Heart left ventricle (tissue), 16 donors: ENCODE measurements at regions of chr1 and their contacts with region 1.

Region 1: GRCh38 chr1:58783993-58784757 is at the start of gene JUN:
- DNase-seq: peak; percentile 99 to 100 (median 100)
- ATAC-seq: peak; percentile 87 to 95 (median 92)
- H3K4me3 ChIP-seq: peak within 1 kb of the TSS; percentile 59 to 99 (median 92)
- H3K27ac ChIP-seq: peak within 1 kb of the TSS; percentile 95 to 100 (median 99)
- H3K4me1 ChIP-seq: peaks cover 0 to 34% (median 19%) of the 10 kb centered on the region in 12 donors
- H3K27me3 ChIP-seq: no peaks in the 10 kb centered on the region
- CTCF ChIP-seq: peak in 5 of 12 donors; percentile 8 to 45 (median 31)
- POLR2A ChIP-seq: peak; percentile 37 to 100
- total RNA-seq, gene JUN: 57.1 to 128 (median 82.8) TPM

Region 2: DNA sequence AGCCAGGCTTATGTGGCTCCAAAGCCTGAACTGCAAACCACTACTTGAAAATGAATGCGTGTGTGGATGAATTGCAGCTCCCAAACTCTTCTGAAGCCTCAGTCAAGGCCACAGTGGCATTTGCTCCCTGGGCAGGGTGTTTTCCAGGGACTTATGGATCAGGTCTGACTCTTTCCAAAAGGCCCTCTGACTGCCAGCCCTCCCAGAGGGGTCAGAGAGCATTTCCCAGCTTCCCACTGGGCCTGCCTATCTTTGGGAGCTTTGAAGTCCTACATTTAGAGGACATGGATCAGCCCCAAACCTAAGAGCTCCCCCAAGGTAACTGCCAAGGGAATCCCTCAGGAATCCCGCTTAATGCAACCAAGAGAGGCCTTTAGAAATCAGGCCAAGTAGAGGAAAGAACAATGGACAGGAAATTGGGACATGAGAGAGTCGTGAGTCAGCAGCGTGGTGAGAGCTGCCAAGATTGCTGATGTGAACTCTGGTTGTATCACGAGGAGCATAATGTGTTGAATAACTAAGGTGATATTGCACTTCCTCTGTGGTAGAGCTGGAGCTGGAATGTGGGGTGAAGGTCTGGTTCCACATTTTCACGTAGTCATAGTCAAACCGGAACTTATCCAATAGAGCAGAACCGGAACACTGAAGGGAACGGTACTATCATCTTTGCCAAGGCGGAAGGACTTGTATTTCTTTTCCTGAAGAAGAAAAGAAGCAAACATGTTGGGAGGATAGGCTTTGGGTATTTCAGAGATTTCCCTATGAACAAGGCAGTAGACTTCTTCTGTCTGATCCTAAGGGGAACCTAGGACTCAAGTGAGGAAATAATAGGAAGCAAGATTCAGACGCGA is 99.1 kb after region 1 on chr1:
- intact Hi-C with region 1: loop called in 1 of 10 experiments (anchors 5 kb)
- DNase-seq: peak; percentile 65 to 87 (median 72)
- ATAC-seq: peak; percentile 38 to 85 (median 73)
- H3K4me3 ChIP-seq: no peak overlapping the region
- H3K27ac ChIP-seq: peak overlapping the region; percentile 11 to 85 (median 70)
- H3K4me1 ChIP-seq: peaks cover 5 to 73% (median 43%) of the 10 kb centered on the region in 12 donors
- H3K27me3 ChIP-seq: no peaks in the 10 kb centered on the region
- CTCF ChIP-seq: no peak
- POLR2A ChIP-seq: no peak

Region 3: DNA sequence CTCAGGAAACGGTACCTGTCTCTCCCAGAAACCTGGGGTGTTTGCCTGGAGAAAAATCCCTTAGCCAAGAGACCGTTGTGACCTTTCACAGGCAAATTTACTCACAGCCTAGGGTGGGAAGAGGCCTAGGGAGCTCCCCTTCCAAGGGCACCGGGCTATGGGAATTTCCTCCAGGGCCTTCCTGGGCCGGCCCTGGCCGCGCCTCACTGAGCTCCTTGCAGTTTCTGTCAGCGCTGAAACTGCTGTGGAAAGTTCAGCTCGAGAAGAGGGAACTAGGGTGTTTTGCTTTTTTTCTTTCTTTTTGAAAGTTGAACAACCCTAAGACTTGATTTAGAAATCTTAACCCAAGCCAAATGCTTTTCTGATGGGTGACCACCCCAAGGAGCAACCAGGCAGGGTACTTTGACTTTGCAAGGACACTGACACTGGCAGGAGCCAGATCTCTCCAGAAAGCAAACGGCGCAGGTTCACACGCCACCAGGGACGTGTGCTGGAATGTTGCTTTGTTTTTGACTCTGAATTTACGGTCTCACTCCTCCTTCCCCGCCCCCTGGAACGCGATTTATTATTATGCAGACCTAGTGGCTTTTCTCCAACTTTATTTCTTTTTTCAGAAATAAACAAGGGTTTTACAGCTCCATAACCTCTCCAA is 229.2 kb after region 1 on chr1:
- intact Hi-C with region 1: loop called in 3 of 10 experiments (anchors 2 to 10 kb)
- DNase-seq: peak; percentile 33 to 65 (median 46)
- ATAC-seq: peak; percentile 40 to 77 (median 69)
- H3K4me3 ChIP-seq: peak overlapping the region in 5 of 12 donors; percentile 4 to 34 (median 23)
- H3K27ac ChIP-seq: peak overlapping the region; percentile 68 to 88 (median 80)
- H3K4me1 ChIP-seq: peaks cover 6 to 51% (median 24%) of the 10 kb centered on the region in 12 donors
- H3K27me3 ChIP-seq: no peaks in the 10 kb centered on the region
- CTCF ChIP-seq: no peak
- POLR2A ChIP-seq: no peak

Region 4: DNA sequence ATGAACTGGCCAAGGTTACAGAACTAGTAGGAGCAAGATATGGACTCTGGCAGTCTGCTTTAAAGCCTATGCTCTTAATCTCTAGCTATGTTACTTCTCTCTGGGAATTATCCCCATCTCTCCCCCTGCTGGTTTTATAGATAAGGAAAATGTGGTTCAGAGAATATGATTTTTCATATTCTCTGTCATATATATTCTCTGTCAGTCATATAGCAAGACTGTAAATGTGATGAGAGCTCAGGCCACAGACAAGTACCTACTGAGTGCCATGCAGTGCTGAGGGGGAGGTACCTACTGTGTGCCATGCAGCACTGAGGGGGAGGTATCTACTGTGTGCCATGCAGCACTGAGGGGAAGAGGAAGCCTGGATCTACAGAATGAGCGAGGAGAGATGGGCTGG is 292.4 kb after region 1 on chr1:
- intact Hi-C with region 1: loop called in 2 of 10 experiments (anchors 10 kb)
- DNase-seq: no peak
- ATAC-seq: peak in 1 of 4 donors; percentile 14
- H3K4me3 ChIP-seq: no peak overlapping the region
- H3K27ac ChIP-seq: no peak overlapping the region
- H3K4me1 ChIP-seq: peaks cover 0 to 28% (median 6%) of the 10 kb centered on the region in 12 donors
- H3K27me3 ChIP-seq: no peaks in the 10 kb centered on the region
- CTCF ChIP-seq: peak in 8 of 12 donors; percentile 11 to 44 (median 22)
- POLR2A ChIP-seq: no peak

Region 5: GRCh38 chr1:59296358-59297256 is 512.4 kb after region 1 on chr1 and contains the start of gene FGGY:
- intact Hi-C with region 1: loop called (anchors 1 to 10 kb)
- DNase-seq: peak; percentile 98 to 99 (median 98)
- ATAC-seq: peak; percentile 94 to 97 (median 95)
- H3K4me3 ChIP-seq: peak within 1 kb of the TSS; percentile 8 to 81 (median 62)
- H3K27ac ChIP-seq: peak within 1 kb of the TSS; percentile 90 to 99 (median 96)
- H3K4me1 ChIP-seq: peaks cover 0 to 45% (median 18%) of the 10 kb centered on the region in 12 donors
- H3K27me3 ChIP-seq: no peaks in the 10 kb centered on the region
- CTCF ChIP-seq: no peak
- POLR2A ChIP-seq: peak; percentile 51 to 78
- total RNA-seq, gene FGGY: 20.8 to 42.9 (median 33.9) TPM

Region 6: GRCh38 chr1:59707178-59707791 is 923.1 kb after region 1 on chr1:
- intact Hi-C with region 1: loop called in 3 of 10 experiments (anchors 5 to 10 kb)
- DNase-seq: peak in 4 of 5 donors; percentile 34 to 76 (median 62)
- ATAC-seq: peak; percentile 53 to 92 (median 86)
- H3K4me3 ChIP-seq: no peak overlapping the region
- H3K27ac ChIP-seq: peak overlapping the region in 11 of 12 donors; percentile 17 to 72 (median 53)
- H3K4me1 ChIP-seq: peaks cover 0 to 60% (median 36%) of the 10 kb centered on the region in 12 donors
- H3K27me3 ChIP-seq: no peaks in the 10 kb centered on the region
- CTCF ChIP-seq: no peak
- POLR2A ChIP-seq: no peak